ENCODE measurements at regions of chr6 and their contacts with region 1.

Region 1: GRCh38 chr6:148565930-148566663 is 180.7 kb upstream of the UST start:
- DNase-seq: no peak
- H3K4me3 ChIP-seq: no peak overlapping the region
- H3K27ac ChIP-seq: no peak overlapping the region
- H3K27me3 ChIP-seq: peaks cover 0 to 2% (median 0%) of the 10 kb centered on the region in 45 donors
- CTCF ChIP-seq: no peak

Region 2: GRCh38 chr6:148614602-148615001 is 48.5 kb after region 1 on chr6:
- intact Hi-C with region 1: loop called in 1 of 2 experiments (anchors 2 kb)
- DNase-seq: no peak
- H3K4me3 ChIP-seq: no peak overlapping the region
- H3K27ac ChIP-seq: no peak overlapping the region
- H3K27me3 ChIP-seq: no peaks in the 10 kb centered on the region
- CTCF ChIP-seq: no peak